Naive thymus-derived CD4-positive, alpha-beta T cell (primary cell): ENCODE measurements at regions of chr3 and their contacts with region 1.

Region 1: GRCh38 chr3:17032407-17033034 is 147.8 kb downstream of the PLCL2 start:
- DNase-seq: no peak
- ATAC-seq: no peak
- H3K4me3 ChIP-seq: no peak overlapping the region
- H3K4me3 Mint-ChIP-seq: peak overlapping the region in 1 of 10 donors; percentile 11
- H3K27ac ChIP-seq: no peak overlapping the region
- H3K27ac Mint-ChIP-seq: peak overlapping the region in 7 of 9 donors; percentile 4 to 60 (median 17)
- H3K4me1 ChIP-seq: peaks cover 0 to 24% of the 10 kb centered on the region in 2 donors
- H3K4me1 Mint-ChIP-seq: peaks cover 48 to 90% (median 80%) of the 10 kb centered on the region in 7 donors
- H3K27me3 ChIP-seq: no peaks in the 10 kb centered on the region
- H3K27me3 Mint-ChIP-seq: no peaks in the 10 kb centered on the region

Region 2: GRCh38 chr3:16148783-16149182 is 883.7 kb before region 1 on chr3:
- CTCF ChIA-PET with region 1: no interaction called
- POLR2A ChIA-PET with region 1: no interaction called
- intact Hi-C with region 1: no loop called
- DNase-seq: no peak
- ATAC-seq: peak; percentile 38
- H3K4me3 ChIP-seq: no peak overlapping the region
- H3K4me3 Mint-ChIP-seq: no peak overlapping the region
- H3K27ac ChIP-seq: no peak overlapping the region
- H3K27ac Mint-ChIP-seq: no peak overlapping the region
- H3K4me1 ChIP-seq: no peaks in the 10 kb centered on the region
- H3K4me1 Mint-ChIP-seq: peaks cover 0 to 6% (median 0%) of the 10 kb centered on the region in 7 donors
- H3K27me3 ChIP-seq: no peaks in the 10 kb centered on the region
- H3K27me3 Mint-ChIP-seq: peaks cover 0 to 18% (median 10%) of the 10 kb centered on the region in 5 donors

Region 3: GRCh38 chr3:17077606-17078005 is 45.1 kb after region 1 on chr3:
- CTCF ChIA-PET with region 1: no interaction called
- POLR2A ChIA-PET with region 1: no interaction called
- intact Hi-C with region 1: loop called in 1 of 2 experiments (anchors 5 kb)
- DNase-seq: no peak
- ATAC-seq: no peak
- H3K4me3 ChIP-seq: no peak overlapping the region
- H3K4me3 Mint-ChIP-seq: peak overlapping the region in 1 of 10 donors; percentile 16
- H3K27ac ChIP-seq: no peak overlapping the region
- H3K27ac Mint-ChIP-seq: peak overlapping the region in 6 of 9 donors; percentile 22 to 82 (median 43)
- H3K4me1 ChIP-seq: peaks cover 20 to 23% of the 10 kb centered on the region in 2 donors
- H3K4me1 Mint-ChIP-seq: peaks cover 35 to 76% (median 61%) of the 10 kb centered on the region in 7 donors
- H3K27me3 ChIP-seq: no peaks in the 10 kb centered on the region
- H3K27me3 Mint-ChIP-seq: no peaks in the 10 kb centered on the region

Region 4: DNA sequence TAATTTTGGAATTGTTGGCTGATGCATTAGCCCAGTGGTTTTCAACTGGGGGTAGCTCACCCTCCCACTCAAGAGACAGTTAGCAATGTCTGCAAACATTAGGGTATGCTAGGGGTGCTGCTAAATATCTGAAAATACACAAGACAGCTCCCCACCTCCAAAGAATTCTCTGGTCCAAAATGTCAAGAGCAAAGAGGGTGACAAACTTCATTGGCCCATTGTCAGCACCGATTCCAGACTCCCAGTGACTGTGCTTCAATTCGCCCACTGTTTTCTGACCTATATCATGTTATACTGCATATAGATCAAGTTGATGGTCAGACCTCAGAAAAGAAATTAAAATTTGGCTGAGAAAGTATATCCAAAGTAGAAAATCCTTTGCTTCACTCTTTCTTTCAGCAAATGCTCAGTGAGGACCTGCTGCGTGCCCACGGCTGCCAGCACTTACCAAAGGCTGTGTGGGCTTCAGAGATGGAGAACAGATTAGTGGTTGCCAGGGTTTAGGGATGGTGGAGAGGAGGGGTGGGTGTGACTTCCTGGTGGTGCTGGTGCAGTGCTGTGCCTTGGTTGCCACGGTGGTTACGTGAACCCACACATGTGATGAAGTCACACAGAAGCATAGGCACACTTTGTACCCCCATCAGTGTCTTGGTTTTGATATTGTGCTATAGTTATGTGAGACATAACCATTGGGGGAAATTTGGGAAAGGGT is 56.2 kb after region 1 on chr3:
- CTCF ChIA-PET with region 1: no interaction called
- POLR2A ChIA-PET with region 1: no interaction called
- intact Hi-C with region 1: no loop called
- DNase-seq: peak in 1 of 9 donors; percentile 29
- ATAC-seq: peak; percentile 81
- H3K4me3 ChIP-seq: no peak overlapping the region
- H3K4me3 Mint-ChIP-seq: peak overlapping the region in 4 of 10 donors; percentile 8 to 45 (median 30)
- H3K27ac ChIP-seq: no peak overlapping the region
- H3K27ac Mint-ChIP-seq: peak overlapping the region; percentile 52 to 90 (median 78)
- H3K4me1 ChIP-seq: peaks cover 6 to 32% of the 10 kb centered on the region in 2 donors
- H3K4me1 Mint-ChIP-seq: peaks cover 16 to 47% (median 38%) of the 10 kb centered on the region in 7 donors
- H3K27me3 ChIP-seq: no peaks in the 10 kb centered on the region
- H3K27me3 Mint-ChIP-seq: no peaks in the 10 kb centered on the region

Region 5: GRCh38 chr3:17213102-17213501 is 180.6 kb after region 1 on chr3:
- CTCF ChIA-PET with region 1: no interaction called
- POLR2A ChIA-PET with region 1: no interaction called
- intact Hi-C with region 1: no loop called
- DNase-seq: no peak
- ATAC-seq: no peak
- H3K4me3 ChIP-seq: no peak overlapping the region
- H3K4me3 Mint-ChIP-seq: no peak overlapping the region
- H3K27ac ChIP-seq: no peak overlapping the region
- H3K27ac Mint-ChIP-seq: no peak overlapping the region
- H3K4me1 ChIP-seq: no peaks in the 10 kb centered on the region
- H3K4me1 Mint-ChIP-seq: peaks cover 0 to 2% (median 0%) of the 10 kb centered on the region in 7 donors
- H3K27me3 ChIP-seq: no peaks in the 10 kb centered on the region
- H3K27me3 Mint-ChIP-seq: no peaks in the 10 kb centered on the region

Region 6: GRCh38 chr3:17655743-17656142 is 623.2 kb after region 1 on chr3:
- CTCF ChIA-PET with region 1: no interaction called
- POLR2A ChIA-PET with region 1: no interaction called
- intact Hi-C with region 1: no loop called
- DNase-seq: no peak
- ATAC-seq: no peak
- H3K4me3 ChIP-seq: no peak overlapping the region
- H3K4me3 Mint-ChIP-seq: no peak overlapping the region
- H3K27ac ChIP-seq: no peak overlapping the region
- H3K27ac Mint-ChIP-seq: no peak overlapping the region
- H3K4me1 ChIP-seq: no peaks in the 10 kb centered on the region
- H3K4me1 Mint-ChIP-seq: peaks cover 0 to 19% (median 12%) of the 10 kb centered on the region in 7 donors
- H3K27me3 ChIP-seq: no peaks in the 10 kb centered on the region
- H3K27me3 Mint-ChIP-seq: no peaks in the 10 kb centered on the region